ENCODE measurements at regions of chr1 and their contacts with region 1.

Region 1: DNA sequence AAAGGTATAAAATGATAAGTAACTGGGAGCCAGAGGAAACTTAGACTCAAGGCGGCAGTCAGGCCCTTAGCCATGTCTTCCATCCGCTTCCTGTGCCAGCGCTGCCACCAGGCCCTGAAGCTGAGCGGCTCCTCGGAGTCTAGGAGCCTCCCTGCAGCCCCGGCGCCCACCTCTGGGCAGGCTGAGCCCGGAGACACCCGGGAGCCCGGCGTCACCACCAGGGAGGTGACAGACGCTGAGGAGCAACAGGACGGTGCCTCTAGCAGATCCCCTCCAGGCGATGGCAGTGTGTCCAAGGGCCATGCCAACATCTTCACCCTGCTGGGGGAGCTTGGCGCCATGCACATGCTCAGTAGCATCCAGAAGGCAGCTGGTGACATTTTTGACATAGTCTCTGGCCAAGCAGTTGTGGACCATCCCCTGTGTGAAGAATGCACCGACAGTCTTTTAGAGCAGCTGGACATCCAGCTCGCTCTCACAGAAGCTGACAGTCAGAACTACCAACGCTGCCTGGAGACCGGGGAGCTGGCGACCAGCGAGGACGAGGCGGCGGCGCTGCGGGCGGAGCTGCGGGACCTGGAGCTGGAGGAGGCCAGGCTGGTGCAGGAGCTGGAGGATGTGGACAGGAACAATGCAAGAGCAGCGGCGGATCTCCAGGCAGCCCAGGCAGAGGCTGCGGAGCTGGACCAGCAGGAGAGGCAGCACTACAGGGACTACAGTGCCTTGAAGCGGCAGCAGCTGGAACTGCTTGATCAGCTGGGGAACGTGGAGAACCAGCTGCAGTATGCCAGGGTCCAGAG is at the start of gene BECN2:
- DNase-seq: no peak
- H3K4me3 ChIP-seq: no peak within 1 kb of the TSS
- H3K27ac ChIP-seq: no peak within 1 kb of the TSS
- H3K4me1 ChIP-seq: no peaks in the 10 kb centered on the region
- H3K27me3 ChIP-seq: no peaks in the 10 kb centered on the region
- CTCF ChIP-seq: no peak
- POLR2A ChIP-seq: no peak
- total RNA-seq, gene BECN2: not detected

Region 2: DNA sequence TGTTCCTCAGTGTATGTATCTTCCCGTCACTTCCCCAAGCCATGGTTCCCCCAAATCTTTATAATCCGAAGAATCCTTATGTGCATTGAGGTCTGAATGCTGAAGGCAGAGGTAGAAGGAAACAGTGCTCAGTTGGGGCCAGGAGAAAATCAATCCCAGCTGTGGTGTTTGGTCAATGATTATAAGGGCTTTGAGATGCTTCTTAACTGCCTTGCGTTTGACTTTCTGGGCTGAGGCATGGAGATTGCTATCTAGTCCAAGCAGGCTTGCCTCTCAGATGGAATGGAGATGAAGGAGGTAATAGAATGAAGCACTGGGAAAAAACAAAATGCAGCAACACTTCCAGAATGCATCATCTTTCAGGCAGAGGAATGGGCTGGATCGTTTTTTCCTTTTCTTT is 44.6 kb after region 1 on chr1:
- intact Hi-C with region 1: loop called (anchors 1 kb)
- DNase-seq: no peak
- H3K4me3 ChIP-seq: no peak overlapping the region
- H3K27ac ChIP-seq: no peak overlapping the region
- H3K4me1 ChIP-seq: no peaks in the 10 kb centered on the region
- H3K27me3 ChIP-seq: no peaks in the 10 kb centered on the region
- CTCF ChIP-seq: no peak
- POLR2A ChIP-seq: no peak